ENCODE measurements at regions of chr19 and their contacts with region 1.

Region 1: DNA sequence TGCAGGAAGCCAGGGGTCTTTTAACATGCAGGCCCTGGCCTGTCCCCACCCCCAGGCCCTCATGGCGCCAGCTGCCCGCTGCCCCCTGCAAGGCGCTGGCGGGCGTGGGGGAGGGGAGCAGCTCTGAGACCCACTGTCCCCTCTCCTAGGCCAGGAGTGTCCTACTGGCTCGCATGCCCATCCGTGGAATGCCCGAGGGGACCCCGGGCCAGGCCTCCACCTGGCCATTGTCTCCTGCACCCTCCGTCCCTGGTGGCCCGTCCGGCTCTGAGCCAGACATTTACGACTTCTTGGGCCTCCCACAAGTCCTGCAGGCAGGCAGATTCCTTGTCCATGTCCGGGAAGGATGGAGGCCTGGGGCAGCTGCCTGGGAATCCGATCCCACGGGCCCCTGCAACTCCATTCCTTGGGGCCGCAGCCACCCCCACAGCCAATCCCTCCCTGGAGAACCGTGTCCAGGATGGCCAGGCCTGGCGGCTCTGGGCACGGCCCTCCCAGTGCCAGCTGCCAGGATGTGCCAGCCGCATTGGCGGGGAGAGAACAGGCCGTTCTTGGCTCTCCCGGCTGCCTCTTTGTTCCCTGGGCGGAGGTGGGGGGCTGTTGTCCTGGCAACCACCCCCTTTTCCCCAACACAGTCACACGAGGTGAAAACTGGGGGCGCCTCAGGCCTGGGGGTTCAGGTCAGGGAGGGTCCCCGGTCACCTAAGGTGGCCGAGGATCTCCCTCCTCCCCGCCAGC is 10.5 kb upstream of the PLIN3 start:
- DNase-seq: peak; percentile 80 to 93
- ATAC-seq: peak; percentile 81 to 83
- H3K4me3 ChIP-seq: peak overlapping the region; percentile 21 to 51 (median 38)
- H3K27ac ChIP-seq: peak overlapping the region; percentile 96 to 100 (median 98)
- H3K4me1 ChIP-seq: peaks cover 20 to 26% of the 10 kb centered on the region in 2 donors
- H3K27me3 ChIP-seq: no peaks in the 10 kb centered on the region
- CTCF ChIP-seq: no peak
- POLR2A ChIP-seq: peak; percentile 21 to 39

Region 2: GRCh38 chr19:4896372-4896771 is 18.4 kb after region 1 on chr19:
- in situ Hi-C with region 1: no loop called
- intact Hi-C with region 1: loop called (anchors 2 kb)
- DNase-seq: peak in 1 of 2 donors; percentile 86
- ATAC-seq: peak; percentile 48 to 67
- H3K4me3 ChIP-seq: no peak overlapping the region
- H3K27ac ChIP-seq: peak overlapping the region; percentile 69 to 79 (median 72)
- H3K4me1 ChIP-seq: peaks cover 6 to 9% of the 10 kb centered on the region in 2 donors
- H3K27me3 ChIP-seq: no peaks in the 10 kb centered on the region
- CTCF ChIP-seq: no peak
- POLR2A ChIP-seq: no peak

Region 3: DNA sequence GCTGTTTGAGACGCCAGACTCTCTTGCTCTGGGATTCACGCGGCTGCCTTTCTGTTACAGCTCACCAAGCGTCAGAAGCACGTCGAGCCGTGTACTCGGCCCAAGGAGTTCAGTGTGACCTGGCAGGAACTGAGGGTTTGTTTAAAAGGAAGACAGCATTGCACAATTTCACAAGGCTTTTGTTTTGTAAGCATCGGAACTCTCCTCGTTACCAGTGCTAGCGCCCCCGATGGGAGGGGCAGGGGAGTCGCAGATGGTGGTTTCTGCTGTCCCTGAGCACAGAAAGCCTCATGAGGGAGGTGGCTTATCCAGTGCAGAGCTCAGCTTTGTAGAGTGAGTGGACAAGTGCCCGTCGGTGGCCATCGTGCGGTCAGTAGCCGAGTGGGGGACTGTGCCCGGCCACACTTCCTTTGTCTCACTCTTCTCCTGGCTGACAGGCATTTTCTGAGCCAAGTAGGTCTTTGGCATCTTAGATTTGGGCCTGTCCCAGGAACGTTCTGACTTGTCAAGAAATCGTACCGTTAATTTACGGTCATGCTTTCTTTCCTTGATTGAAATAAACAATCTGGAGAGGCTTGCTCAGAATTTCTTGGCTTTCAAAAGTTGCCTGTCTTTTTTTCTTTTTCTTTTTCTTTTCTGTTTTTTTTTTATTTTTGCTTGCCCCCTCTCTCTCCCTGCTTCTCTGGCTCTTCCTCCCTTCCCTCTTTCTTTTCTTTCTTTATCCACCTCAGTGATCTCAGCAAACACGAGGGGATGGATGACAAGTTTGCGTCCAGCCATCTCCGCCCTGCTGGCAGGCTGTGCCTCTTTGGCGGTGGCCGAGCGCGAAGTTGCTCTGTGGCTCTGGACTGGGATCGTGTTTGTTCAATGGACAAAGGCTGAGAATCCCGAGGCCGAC is 98.7 kb after region 1 on chr19:
- in situ Hi-C with region 1: no loop called
- intact Hi-C with region 1: loop called (anchors 1 kb)
- DNase-seq: peak; percentile 92 to 94
- ATAC-seq: peak; percentile 82 to 86
- H3K4me3 ChIP-seq: peak overlapping the region; percentile 26 to 40 (median 38)
- H3K27ac ChIP-seq: peak overlapping the region; percentile 85 to 96 (median 93)
- H3K4me1 ChIP-seq: peaks cover 80 to 82% of the 10 kb centered on the region in 2 donors
- H3K27me3 ChIP-seq: no peaks in the 10 kb centered on the region
- CTCF ChIP-seq: peak in 4 of 5 experiments; percentile 28 to 54 (median 38)
- POLR2A ChIP-seq: peak; percentile 64 to 79

Measured in gastrocnemius medialis (tissue), 4 donors.